ENCODE measurements at regions of chr5 and their contacts with region 1.

Region 1: GRCh38 chr5:178232124-178232919 is at the start of gene PHYKPL:
- DNase-seq: peak; percentile 93
- H3K4me3 Mint-ChIP-seq: peak within 1 kb of the TSS; percentile 91
- H3K27ac Mint-ChIP-seq: peak within 1 kb of the TSS; percentile 87
- H3K4me1 Mint-ChIP-seq: peaks cover 51% of the 10 kb centered on the region
- H3K27me3 Mint-ChIP-seq: no peaks in the 10 kb centered on the region
- total RNA-seq, gene PHYKPL: 77.8 and 85.9 TPM in 2 replicates

Region 2: DNA sequence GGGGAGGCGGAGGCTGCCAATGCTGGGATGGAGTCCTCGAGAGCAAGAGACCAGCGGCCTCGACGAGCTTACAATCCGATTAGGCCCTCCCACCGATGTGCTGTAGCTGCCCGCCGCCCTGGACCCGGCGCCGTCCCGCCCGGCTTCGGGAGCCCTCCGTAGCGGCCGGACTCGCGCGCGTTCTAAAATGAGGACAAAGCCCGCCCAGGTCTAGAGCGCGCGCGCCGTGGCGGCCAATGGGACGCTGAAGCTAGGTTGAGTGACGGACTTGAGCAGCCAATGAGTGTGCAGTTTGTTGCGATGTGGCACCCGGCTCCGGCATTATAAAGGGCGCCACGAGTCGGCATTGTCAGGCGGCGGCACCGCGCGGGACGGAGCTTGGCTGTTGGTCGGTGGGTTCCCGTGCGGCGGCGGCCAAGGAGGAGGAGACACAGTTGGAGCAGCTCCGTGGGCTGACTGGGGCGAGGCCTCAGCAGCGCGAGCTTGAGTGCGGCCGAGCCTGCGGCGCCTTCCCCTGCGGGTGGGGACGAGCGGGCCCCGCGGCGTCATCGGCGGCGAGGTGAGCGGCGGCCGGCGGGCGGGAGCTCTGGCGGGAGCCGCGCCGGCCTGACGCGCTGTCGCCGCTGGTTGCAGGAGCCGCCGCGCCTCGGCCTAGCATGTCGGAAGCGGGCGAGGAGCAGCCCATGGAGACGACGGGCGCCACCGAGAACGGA is 28.0 kb before region 1 on chr5 and contains the start of gene HNRNPAB:
- intact Hi-C with region 1: loop called (anchors 2 kb)
- DNase-seq: peak; percentile 99
- H3K4me3 Mint-ChIP-seq: peak within 1 kb of the TSS; percentile 98
- H3K27ac Mint-ChIP-seq: peak within 1 kb of the TSS; percentile 99
- H3K4me1 Mint-ChIP-seq: peaks cover 26% of the 10 kb centered on the region
- H3K27me3 Mint-ChIP-seq: peaks cover 2% of the 10 kb centered on the region
- total RNA-seq, gene HNRNPAB: 492 and 507 TPM in 2 replicates

Region 3: DNA sequence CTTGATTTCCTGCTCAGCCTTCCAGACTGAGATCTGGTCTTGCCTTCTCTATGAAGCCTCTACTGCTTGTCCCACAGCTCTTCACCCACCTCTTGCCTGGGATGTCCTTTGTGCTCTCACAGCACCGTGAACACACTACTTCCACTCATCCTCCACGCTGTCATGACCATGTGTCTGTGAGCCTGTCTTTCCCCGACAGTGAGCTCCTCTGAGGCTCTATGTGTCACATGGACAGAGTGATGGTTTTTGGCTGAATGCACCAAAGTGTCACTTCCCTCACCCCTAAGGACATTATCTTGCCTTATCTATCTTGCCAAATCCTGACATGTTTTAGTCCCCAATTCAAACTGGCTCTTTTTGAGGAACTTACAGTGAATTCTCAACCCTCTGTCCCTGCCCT is 11.0 kb before region 1 on chr5:
- intact Hi-C with region 1: no loop called
- DNase-seq: no peak
- H3K4me3 Mint-ChIP-seq: no peak overlapping the region
- H3K27ac Mint-ChIP-seq: peak overlapping the region; percentile 72
- H3K4me1 Mint-ChIP-seq: peaks cover 15% of the 10 kb centered on the region
- H3K27me3 Mint-ChIP-seq: no peaks in the 10 kb centered on the region

Region 4: DNA sequence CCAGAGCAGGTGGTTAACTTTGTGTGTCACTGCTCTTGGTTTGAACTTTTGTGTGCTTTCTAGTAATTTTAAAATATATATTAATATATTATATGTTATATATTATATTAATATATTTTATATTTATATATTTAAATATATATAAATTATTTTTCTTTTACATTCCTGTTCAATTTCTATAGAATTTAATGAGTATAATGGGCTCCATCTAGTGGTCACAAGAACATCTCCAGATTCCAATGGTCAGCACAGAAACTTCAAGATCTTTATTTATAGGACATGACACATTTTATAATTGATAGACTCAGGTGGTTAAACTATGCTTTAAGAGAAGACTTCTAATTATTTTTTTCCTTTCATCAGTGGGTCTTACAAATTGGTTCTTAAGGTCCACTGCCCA is 318.7 kb after region 1 on chr5:
- intact Hi-C with region 1: loop called (anchors 5 kb)
- DNase-seq: no peak
- H3K4me3 Mint-ChIP-seq: no peak overlapping the region
- H3K27ac Mint-ChIP-seq: no peak overlapping the region
- H3K4me1 Mint-ChIP-seq: no peaks in the 10 kb centered on the region
- H3K27me3 Mint-ChIP-seq: no peaks in the 10 kb centered on the region

Region 5: DNA sequence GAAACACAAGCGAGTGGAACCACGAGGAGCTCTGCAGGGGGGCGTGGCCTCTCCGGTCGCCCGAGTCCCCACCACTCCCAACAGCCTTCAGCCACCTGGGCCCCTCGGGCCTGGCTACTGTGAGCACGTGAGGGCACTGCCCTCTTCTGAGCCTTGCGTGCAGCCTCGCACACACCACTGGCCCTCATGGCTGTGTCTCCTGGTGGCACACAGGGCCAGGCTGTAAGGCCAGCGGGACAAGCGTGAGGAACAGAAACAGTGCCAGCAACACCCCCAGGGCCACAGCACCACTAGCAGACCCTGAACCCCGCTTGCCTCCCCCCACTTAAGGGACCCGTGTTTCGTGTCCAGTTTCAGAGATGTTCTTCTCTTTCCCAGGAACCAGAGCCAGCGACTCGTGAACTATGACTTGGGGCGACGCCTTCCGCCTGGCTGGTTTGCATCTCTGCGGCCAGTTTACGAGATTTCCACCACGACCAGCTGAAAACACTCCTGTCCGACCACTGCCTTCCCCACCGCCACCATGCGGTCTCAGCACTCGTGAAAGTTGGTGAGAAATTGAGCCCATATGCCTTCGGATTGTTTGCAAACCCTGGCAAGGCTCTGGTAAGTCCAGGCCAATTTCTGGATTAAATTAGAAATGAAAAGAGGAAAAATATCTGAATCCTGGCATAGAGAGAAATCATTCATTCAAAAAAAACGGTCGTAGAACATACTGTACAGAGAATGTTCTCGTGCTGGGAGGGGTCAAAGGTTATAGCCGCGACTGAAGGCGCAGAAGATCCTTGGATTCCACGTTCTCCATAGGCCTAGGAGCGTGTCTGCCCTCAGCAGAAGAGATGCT is 963.5 kb after region 1 on chr5:
- intact Hi-C with region 1: no loop called
- DNase-seq: no peak
- H3K4me3 Mint-ChIP-seq: no peak overlapping the region
- H3K27ac Mint-ChIP-seq: no peak overlapping the region
- H3K4me1 Mint-ChIP-seq: no peaks in the 10 kb centered on the region
- H3K27me3 Mint-ChIP-seq: no peaks in the 10 kb centered on the region

Region 6: GRCh38 chr5:179559284-179560252 is 1327.2 kb after region 1 on chr5:
- intact Hi-C with region 1: loop called (anchors 10 kb)
- DNase-seq: peak; percentile 98
- H3K4me3 Mint-ChIP-seq: peak overlapping the region; percentile 92
- H3K27ac Mint-ChIP-seq: peak overlapping the region; percentile 90
- H3K4me1 Mint-ChIP-seq: peaks cover 18% of the 10 kb centered on the region
- H3K27me3 Mint-ChIP-seq: no peaks in the 10 kb centered on the region